Panc1 (cell line): ENCODE measurements at regions of chr13 and their contacts with region 1.

Region 1: GRCh38 chr13:42821437-42821836 is 40.1 kb downstream of the FAM216B start:
- DNase-seq: no peak
- ATAC-seq: no peak
- H3K4me3 ChIP-seq: no peak overlapping the region
- H3K27ac ChIP-seq: no peak overlapping the region
- H3K4me1 ChIP-seq: no peaks in the 10 kb centered on the region
- H3K27me3 ChIP-seq: no peaks in the 10 kb centered on the region
- CTCF ChIP-seq: no peak

Region 2: GRCh38 chr13:43270130-43270830 is 448.8 kb after region 1 on chr13:
- CTCF ChIA-PET with region 1: no interaction called
- POLR2A ChIA-PET with region 1: interaction called, 22 read pairs
- in situ Hi-C with region 1: no loop called
- intact Hi-C with region 1: no loop called
- DNase-seq: no peak
- ATAC-seq: no peak
- H3K4me3 ChIP-seq: no peak overlapping the region
- H3K27ac ChIP-seq: peak overlapping the region; percentile 75
- H3K4me1 ChIP-seq: peaks cover 21% of the 10 kb centered on the region
- H3K27me3 ChIP-seq: no peaks in the 10 kb centered on the region
- CTCF ChIP-seq: no peak